ENCODE measurements at regions of chr6 and their contacts with region 1.

Region 1: GRCh38 chr6:21593412-21593926 is at the start of gene SOX4:
- DNase-seq: peak; percentile 91 to 97 (median 92)
- ATAC-seq: peak; percentile 79
- H3K4me3 ChIP-seq: peak within 1 kb of the TSS; percentile 71
- H3K4me1 ChIP-seq: peaks cover 8% of the 10 kb centered on the region
- CTCF ChIP-seq: no peak
- total RNA-seq, gene SOX4: 14.9 to 54.5 (median 26.5) TPM

Region 2: GRCh38 chr6:20564269-20564668 is 1029.2 kb before region 1 on chr6:
- intact Hi-C with region 1: loop called (anchors 5 kb)
- DNase-seq: no peak
- ATAC-seq: no peak
- H3K4me3 ChIP-seq: no peak overlapping the region
- H3K4me1 ChIP-seq: no peaks in the 10 kb centered on the region
- CTCF ChIP-seq: peak; percentile 25

Region 3: DNA sequence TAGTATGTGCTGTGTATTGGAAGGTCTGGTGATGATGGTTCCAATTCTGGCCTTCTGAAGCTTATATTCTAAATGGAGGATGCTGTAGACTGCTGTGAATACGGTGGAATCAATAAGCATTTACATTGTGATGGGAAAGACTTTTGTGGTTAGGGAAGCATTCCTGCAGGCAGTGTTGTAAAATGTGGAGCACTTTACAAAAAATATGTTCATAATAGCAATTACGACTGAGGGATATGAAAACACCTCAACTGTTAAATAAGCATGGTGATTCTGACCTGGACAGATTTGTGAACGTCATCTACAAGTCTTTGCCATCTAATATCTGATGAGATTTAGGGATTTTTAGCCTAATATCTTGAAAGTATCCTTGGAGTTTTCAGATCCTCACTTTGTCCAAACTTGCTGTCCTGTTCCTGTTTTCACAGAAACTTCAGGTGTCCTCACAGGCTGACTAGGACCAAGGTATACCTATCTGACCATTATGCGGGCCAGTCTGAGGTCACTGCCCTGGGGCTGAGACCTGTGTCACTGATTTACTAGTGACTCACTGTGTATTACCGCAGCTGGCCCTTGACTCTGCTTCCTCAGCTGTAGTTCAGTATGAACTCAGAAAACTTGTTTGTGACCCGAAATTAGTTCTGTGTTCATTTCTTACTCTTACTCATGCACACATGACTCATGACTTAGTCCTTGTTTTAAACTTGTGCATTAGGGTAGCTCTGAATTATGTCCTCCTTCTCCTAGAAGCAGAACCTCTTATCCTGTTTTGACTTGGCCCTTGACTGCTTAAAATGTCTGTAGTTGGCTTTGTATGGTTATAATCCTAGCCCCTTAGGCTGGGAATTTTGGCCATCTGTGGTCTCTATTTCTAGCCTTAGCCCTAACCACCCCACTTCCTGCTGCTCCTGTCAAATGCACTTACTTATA is 716.2 kb before region 1 on chr6:
- intact Hi-C with region 1: loop called in 1 of 2 experiments (anchors 5 kb)
- DNase-seq: peak in 1 of 3 donors; percentile 25
- ATAC-seq: peak; percentile 98
- H3K4me3 ChIP-seq: no peak overlapping the region
- H3K4me1 ChIP-seq: peaks cover 5% of the 10 kb centered on the region
- CTCF ChIP-seq: no peak

Region 4: DNA sequence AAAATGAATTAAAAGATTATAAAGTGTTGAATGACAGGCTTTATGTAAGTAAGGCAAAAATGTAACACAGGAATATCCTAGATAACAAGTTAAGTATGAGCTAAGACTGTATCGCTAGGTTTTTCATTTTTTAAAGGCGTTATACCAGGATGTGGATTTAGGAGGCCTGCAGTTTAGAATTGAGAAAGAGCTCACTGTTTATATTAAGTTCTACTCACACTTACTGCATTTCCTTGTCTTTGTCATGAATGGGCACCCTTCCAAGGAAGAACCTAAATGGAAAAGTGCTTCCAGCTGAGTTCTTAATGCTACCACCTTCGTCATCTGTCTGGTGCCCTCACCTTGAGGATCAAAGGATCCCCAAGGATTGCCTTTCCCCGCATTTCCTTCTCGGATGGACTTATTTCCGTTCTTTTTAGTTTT is 148.8 kb after region 1 on chr6:
- intact Hi-C with region 1: no loop called
- DNase-seq: no peak
- ATAC-seq: peak; percentile 66
- H3K4me3 ChIP-seq: no peak overlapping the region
- H3K4me1 ChIP-seq: peaks cover 12% of the 10 kb centered on the region
- CTCF ChIP-seq: no peak

Region 5: GRCh38 chr6:21935561-21936028 is 342.1 kb after region 1 on chr6:
- intact Hi-C with region 1: loop called in 1 of 2 experiments (anchors 10 kb)
- DNase-seq: peak in 1 of 3 donors; percentile 71
- ATAC-seq: peak; percentile 76
- H3K4me3 ChIP-seq: no peak overlapping the region
- H3K4me1 ChIP-seq: no peaks in the 10 kb centered on the region
- CTCF ChIP-seq: peak; percentile 21

Region 6: DNA sequence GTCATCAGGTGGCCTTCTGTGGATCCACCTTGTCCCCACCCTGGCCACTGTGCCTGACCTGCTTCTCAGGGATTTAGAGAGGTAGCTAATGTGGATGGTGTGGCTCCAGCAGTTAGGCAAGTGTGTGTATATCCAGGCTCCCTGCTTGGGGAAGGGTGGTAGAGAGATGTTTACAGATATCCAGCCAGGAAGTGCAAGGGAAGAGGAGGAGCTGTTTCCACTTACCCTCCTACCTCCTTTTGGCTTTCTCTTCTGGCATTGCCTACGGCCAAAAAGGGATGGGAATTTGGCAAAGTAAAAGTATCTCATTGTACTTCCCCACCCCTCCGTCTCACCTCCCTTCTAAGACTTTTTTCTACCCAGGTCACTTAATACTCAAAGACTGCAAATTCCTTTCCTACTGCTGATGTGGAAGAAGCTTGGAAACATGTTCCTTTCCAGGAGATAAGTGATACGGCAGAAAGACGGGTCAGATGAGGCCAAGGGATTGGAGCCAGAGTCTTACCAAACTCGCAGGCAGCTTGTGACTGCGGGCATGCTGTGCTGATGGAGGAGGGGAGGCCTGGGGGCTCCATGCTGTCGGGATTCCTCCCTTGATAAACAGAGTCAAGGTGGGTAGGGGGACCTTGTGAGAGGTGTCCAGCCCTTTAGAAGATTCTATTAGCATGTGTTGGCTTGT is 450.0 kb after region 1 on chr6:
- intact Hi-C with region 1: no loop called
- DNase-seq: no peak
- ATAC-seq: no peak
- H3K4me3 ChIP-seq: no peak overlapping the region
- H3K4me1 ChIP-seq: no peaks in the 10 kb centered on the region
- CTCF ChIP-seq: no peak